GM12878 (cell line): ENCODE measurements at regions of chr15 and their contacts with region 1.

Region 1: GRCh38 chr15:64515196-64515595 is 54.8 kb downstream of the ZNF609 start:
- DNase-seq: no peak
- ATAC-seq: no peak
- H3K4me3 ChIP-seq: no peak overlapping the region
- H3K27ac ChIP-seq: no peak overlapping the region
- H3K4me1 ChIP-seq: peaks cover 11% of the 10 kb centered on the region
- H3K27me3 ChIP-seq: no peaks in the 10 kb centered on the region
- CTCF ChIP-seq: no peak
- EP300 ChIP-seq: no peak
- POLR2A ChIP-seq: no peak
- RAD21 ChIP-seq: no peak

Region 2: DNA sequence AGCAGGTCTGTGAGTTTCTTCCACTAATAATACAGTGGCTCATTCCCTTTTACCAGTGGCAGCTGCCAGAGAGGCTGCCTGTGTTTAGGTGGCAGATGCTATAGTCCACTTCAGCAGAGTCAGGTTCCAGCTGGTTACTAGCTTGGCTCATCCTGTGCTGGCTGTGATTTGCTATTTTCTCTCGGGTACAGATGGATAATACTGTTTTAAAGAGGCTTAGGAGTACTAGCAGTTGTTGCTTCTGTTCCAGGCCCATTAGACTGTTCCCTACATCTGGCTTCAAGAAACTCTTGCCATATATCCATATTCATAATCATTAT is 13.8 kb before region 1 on chr15:
- CTCF ChIA-PET with region 1: interaction called, 3 read pairs
- POLR2A ChIA-PET with region 1: interaction called, 7 read pairs
- RAD21 ChIA-PET with region 1: interaction called, 6 read pairs
- SMC1A ChIA-PET with region 1: interaction called, 11 read pairs
- in situ Hi-C with region 1: no loop called
- intact Hi-C with region 1: no loop called
- DNase-seq: no peak
- ATAC-seq: no peak
- H3K4me3 ChIP-seq: no peak overlapping the region
- H3K27ac ChIP-seq: no peak overlapping the region
- H3K4me1 ChIP-seq: peaks cover 14% of the 10 kb centered on the region
- H3K27me3 ChIP-seq: no peaks in the 10 kb centered on the region
- CTCF ChIP-seq: no peak
- EP300 ChIP-seq: no peak
- POLR2A ChIP-seq: no peak
- RAD21 ChIP-seq: no peak

Region 3: DNA sequence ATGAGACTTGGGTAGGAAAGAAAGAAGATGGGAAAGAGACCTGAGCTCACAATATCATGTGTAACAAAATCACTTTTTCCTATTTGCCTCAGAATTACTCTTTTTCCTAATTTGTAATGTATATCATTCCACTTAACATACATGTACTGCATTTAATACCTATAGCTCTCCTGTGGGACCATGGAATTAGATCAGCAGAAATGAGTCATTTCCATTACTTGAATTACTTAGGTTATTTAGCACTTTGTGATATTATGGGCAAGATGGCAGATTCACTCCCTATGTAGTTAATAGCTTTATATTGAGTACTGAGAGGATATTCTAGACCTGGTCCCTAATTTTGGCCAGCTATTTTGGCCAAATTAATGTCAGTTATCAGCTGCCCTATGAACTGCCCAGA is 15.7 kb after region 1 on chr15:
- CTCF ChIA-PET with region 1: interaction called, 3 read pairs
- POLR2A ChIA-PET with region 1: interaction called, 3 read pairs
- RAD21 ChIA-PET with region 1: interaction called, 6 read pairs
- SMC1A ChIA-PET with region 1: interaction called, 13 read pairs
- in situ Hi-C with region 1: no loop called
- intact Hi-C with region 1: no loop called
- DNase-seq: no peak
- ATAC-seq: no peak
- H3K4me3 ChIP-seq: no peak overlapping the region
- H3K27ac ChIP-seq: no peak overlapping the region
- H3K4me1 ChIP-seq: peaks cover 14% of the 10 kb centered on the region
- H3K27me3 ChIP-seq: no peaks in the 10 kb centered on the region
- CTCF ChIP-seq: no peak
- EP300 ChIP-seq: no peak
- POLR2A ChIP-seq: no peak
- RAD21 ChIP-seq: no peak